CD8-positive, alpha-beta T cell (primary cell): ENCODE measurements at regions of chr12 and their contacts with region 1.

Region 1: GRCh38 chr12:103840876-103841689 is at the start of gene NT5DC3:
- DNase-seq: peak; percentile 66 to 91 (median 82)
- ATAC-seq: peak; percentile 93
- H3K4me3 ChIP-seq: peak within 1 kb of the TSS; percentile 64 to 68
- H3K4me3 Mint-ChIP-seq: peak within 1 kb of the TSS; percentile 85
- H3K27ac ChIP-seq: peak within 1 kb of the TSS; percentile 36 to 40
- H3K27ac Mint-ChIP-seq: peak within 1 kb of the TSS; percentile 74
- H3K4me1 ChIP-seq: peaks cover 11% of the 10 kb centered on the region
- H3K4me1 Mint-ChIP-seq: peaks cover 18% of the 10 kb centered on the region
- H3K27me3 ChIP-seq: no peaks in the 10 kb centered on the region
- H3K27me3 Mint-ChIP-seq: no peaks in the 10 kb centered on the region
- CTCF ChIP-seq: no peak
- total RNA-seq, gene NT5DC3: 4.3 to 5.6 TPM

Region 2: DNA sequence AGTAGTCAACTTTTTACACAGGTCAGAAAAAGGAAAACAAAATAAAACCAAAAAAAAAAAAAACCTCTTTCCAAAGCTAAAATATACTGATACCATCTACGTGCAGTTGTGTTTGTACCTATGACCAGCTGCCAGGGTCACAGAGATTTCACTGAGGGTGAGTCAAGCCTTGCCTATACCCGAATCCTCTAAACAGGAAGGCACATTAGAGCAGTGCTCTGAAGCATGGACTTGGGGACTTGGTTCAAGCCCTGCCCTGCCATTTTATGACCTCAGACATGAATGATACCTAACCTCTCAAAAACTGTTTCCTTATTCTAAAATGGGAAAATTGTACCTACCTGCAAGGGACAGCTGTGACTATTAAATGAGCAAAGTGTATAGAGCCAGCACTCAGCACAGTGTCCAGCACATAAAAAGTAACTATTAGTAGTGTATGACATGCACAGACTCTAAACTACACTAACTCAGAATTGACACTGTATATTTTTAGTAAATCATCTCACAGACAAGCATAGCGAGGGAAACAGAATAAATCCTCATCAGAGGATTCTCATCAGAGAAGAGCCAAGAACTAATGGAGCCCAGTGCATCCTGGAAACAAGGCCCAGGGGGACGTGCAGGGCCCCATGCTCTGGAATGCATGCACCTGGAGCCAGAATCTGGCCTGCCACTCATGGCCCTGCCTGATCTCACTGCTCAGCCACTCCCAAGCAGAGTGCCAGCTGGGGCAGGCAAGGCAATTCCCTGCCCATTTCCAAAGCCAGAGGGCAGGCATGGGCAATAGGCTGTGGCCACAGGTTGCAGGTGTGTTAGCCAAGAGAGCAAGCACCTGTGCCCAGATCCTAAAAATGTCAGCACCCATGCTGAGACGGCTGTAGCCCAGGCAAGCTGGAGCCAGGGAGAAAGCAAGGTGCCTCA is 57.1 kb before region 1 on chr12:
- CTCF ChIA-PET with region 1: no interaction called
- POLR2A ChIA-PET with region 1: no interaction called
- intact Hi-C with region 1: no loop called
- DNase-seq: no peak
- ATAC-seq: no peak
- H3K4me3 ChIP-seq: no peak overlapping the region
- H3K4me3 Mint-ChIP-seq: no peak overlapping the region
- H3K27ac ChIP-seq: no peak overlapping the region
- H3K27ac Mint-ChIP-seq: no peak overlapping the region
- H3K4me1 ChIP-seq: no peaks in the 10 kb centered on the region
- H3K4me1 Mint-ChIP-seq: no peaks in the 10 kb centered on the region
- H3K27me3 ChIP-seq: no peaks in the 10 kb centered on the region
- H3K27me3 Mint-ChIP-seq: no peaks in the 10 kb centered on the region
- CTCF ChIP-seq: no peak

Region 3: DNA sequence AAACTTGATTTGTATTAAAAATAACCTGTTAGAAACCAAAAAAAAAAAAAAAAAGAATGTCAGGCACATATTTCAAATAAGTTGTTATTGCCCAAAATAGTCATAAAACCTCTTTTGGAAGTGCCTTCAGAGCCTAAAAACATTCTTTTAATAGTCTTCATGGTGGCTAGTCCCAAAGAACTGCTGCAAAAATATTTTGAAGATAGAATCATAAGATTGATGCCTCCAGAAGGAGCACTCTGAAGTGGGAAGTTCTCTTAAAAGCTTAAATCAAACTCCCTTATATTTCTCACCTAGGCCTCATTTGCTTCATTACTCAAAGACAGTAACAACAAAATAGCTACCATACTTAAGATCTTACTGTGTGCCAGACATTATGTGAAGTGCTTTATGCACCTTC is 27.1 kb after region 1 on chr12:
- CTCF ChIA-PET with region 1: no interaction called
- POLR2A ChIA-PET with region 1: no interaction called
- intact Hi-C with region 1: no loop called
- DNase-seq: no peak
- ATAC-seq: no peak
- H3K4me3 ChIP-seq: no peak overlapping the region
- H3K4me3 Mint-ChIP-seq: no peak overlapping the region
- H3K27ac ChIP-seq: no peak overlapping the region
- H3K27ac Mint-ChIP-seq: no peak overlapping the region
- H3K4me1 ChIP-seq: no peaks in the 10 kb centered on the region
- H3K4me1 Mint-ChIP-seq: no peaks in the 10 kb centered on the region
- H3K27me3 ChIP-seq: no peaks in the 10 kb centered on the region
- H3K27me3 Mint-ChIP-seq: peaks cover 4% of the 10 kb centered on the region
- CTCF ChIP-seq: no peak

Region 4: GRCh38 chr12:104064031-104064822 is 223.1 kb after region 1 on chr12 and contains the start of gene HCFC2:
- CTCF ChIA-PET with region 1: no interaction called
- POLR2A ChIA-PET with region 1: no interaction called
- intact Hi-C with region 1: loop called (anchors 1 to 2 kb)
- DNase-seq: peak; percentile 71 to 92 (median 87)
- ATAC-seq: peak; percentile 92
- H3K4me3 ChIP-seq: peak within 1 kb of the TSS; percentile 75 to 98
- H3K4me3 Mint-ChIP-seq: peak within 1 kb of the TSS; percentile 95
- H3K27ac ChIP-seq: peak within 1 kb of the TSS; percentile 61 to 64
- H3K27ac Mint-ChIP-seq: peak within 1 kb of the TSS; percentile 93
- H3K4me1 ChIP-seq: peaks cover 7% of the 10 kb centered on the region
- H3K4me1 Mint-ChIP-seq: peaks cover 29% of the 10 kb centered on the region
- H3K27me3 ChIP-seq: peaks cover 0 to 3% of the 10 kb centered on the region in 2 experiments
- H3K27me3 Mint-ChIP-seq: peaks cover 4% of the 10 kb centered on the region
- CTCF ChIP-seq: no peak
- total RNA-seq, gene HCFC2: 13.9 to 16.7 TPM

Region 5: DNA sequence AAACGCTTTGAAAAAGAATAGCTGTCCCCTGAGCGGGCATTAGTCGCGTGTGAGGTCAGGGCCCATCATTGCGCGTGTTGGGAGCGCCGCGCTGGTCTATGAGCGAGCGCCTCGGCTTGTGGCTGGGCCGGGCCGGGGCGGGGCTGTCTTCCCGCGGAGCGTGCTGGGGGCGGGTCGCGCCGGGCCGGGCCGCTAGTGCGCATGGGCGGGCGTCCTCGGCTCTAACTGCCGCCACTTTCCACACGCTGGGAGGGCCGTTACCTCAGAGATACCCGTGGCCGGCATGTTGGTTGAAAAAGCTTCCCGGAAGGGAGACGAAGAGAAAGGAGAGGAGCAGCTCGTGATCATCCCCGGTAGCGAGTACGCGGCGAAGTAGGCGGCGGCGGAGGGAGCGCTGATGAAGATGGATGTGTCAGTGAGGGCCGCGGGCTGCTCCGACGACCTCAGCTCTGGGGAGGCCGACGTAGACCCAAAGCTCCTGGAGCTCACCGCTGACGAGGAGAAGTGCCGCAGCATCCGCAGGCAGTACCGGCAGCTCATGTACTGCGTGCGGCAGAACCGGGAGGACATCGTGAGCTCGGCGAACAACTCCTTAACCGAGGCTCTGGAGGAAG is 462.6 kb after region 1 on chr12 and contains the start of gene EID3:
- CTCF ChIA-PET with region 1: no interaction called
- POLR2A ChIA-PET with region 1: no interaction called
- intact Hi-C with region 1: loop called (anchors 5 kb)
- DNase-seq: peak; percentile 78 to 92 (median 91)
- ATAC-seq: peak; percentile 96
- H3K4me3 ChIP-seq: peak within 1 kb of the TSS; percentile 63 to 74
- H3K4me3 Mint-ChIP-seq: peak within 1 kb of the TSS; percentile 95
- H3K27ac ChIP-seq: peak within 1 kb of the TSS; percentile 60 to 80
- H3K27ac Mint-ChIP-seq: peak within 1 kb of the TSS; percentile 98
- H3K4me1 ChIP-seq: peaks cover 27% of the 10 kb centered on the region
- H3K4me1 Mint-ChIP-seq: peaks cover 62% of the 10 kb centered on the region
- H3K27me3 ChIP-seq: no peaks in the 10 kb centered on the region
- H3K27me3 Mint-ChIP-seq: no peaks in the 10 kb centered on the region
- CTCF ChIP-seq: no peak
- total RNA-seq, gene EID3: 11.7 to 13.0 TPM

Region 6: GRCh38 chr12:105235732-105236476 is 1394.8 kb after region 1 on chr12 and contains the start of gene APPL2:
- CTCF ChIA-PET with region 1: no interaction called
- POLR2A ChIA-PET with region 1: no interaction called
- intact Hi-C with region 1: loop called in 1 of 2 experiments (anchors 10 kb)
- DNase-seq: peak; percentile 62 to 91 (median 82)
- ATAC-seq: peak; percentile 73
- H3K4me3 ChIP-seq: peak within 1 kb of the TSS; percentile 75 to 77
- H3K4me3 Mint-ChIP-seq: peak within 1 kb of the TSS; percentile 93
- H3K27ac ChIP-seq: peak within 1 kb of the TSS; percentile 79 to 87
- H3K27ac Mint-ChIP-seq: peak within 1 kb of the TSS; percentile 97
- H3K4me1 ChIP-seq: peaks cover 36% of the 10 kb centered on the region
- H3K4me1 Mint-ChIP-seq: peaks cover 51% of the 10 kb centered on the region
- H3K27me3 ChIP-seq: no peaks in the 10 kb centered on the region
- H3K27me3 Mint-ChIP-seq: no peaks in the 10 kb centered on the region
- CTCF ChIP-seq: no peak
- total RNA-seq, gene APPL2: 53.1 to 60.6 TPM